ENCODE measurements at regions of chr15 and their contacts with region 1.

Region 1: DNA sequence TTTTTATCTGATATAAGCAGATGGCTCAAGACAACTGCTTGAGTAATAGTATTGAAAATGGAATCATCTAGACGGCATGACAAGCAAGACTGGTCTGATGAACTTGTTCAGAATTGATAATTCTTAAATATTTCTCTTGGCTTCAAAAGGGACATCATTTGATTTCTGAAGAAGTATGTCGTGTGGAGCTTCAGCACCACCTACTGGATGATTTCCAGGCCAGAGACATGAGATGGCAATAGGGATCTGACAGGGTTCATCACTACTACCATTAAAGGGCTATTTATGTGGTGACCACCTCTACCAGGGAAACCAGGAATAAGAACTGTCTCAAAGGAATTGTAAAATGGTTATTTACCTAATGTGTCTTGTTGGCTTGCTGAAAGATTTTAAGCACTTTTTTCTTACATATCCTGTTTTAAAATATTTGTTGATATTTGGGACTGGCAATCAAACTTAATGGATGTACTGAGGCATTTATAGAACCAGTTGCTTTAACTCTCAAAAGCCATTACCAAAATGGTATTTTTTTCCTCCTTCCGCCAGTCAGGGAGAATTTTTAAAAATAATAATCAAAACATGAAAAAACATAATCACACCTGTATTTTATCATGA is 99.5 kb upstream of the FAM98B start:
- DNase-seq: peak; percentile 61
- H3K4me3 ChIP-seq: no peak overlapping the region
- H3K27ac ChIP-seq: no peak overlapping the region
- H3K4me1 ChIP-seq: no peaks in the 10 kb centered on the region
- H3K27me3 ChIP-seq: no peaks in the 10 kb centered on the region
- CTCF ChIP-seq: peak; percentile 71 to 75 (median 72)
- EP300 ChIP-seq: no peak
- POLR2A ChIP-seq: no peak

Region 2: DNA sequence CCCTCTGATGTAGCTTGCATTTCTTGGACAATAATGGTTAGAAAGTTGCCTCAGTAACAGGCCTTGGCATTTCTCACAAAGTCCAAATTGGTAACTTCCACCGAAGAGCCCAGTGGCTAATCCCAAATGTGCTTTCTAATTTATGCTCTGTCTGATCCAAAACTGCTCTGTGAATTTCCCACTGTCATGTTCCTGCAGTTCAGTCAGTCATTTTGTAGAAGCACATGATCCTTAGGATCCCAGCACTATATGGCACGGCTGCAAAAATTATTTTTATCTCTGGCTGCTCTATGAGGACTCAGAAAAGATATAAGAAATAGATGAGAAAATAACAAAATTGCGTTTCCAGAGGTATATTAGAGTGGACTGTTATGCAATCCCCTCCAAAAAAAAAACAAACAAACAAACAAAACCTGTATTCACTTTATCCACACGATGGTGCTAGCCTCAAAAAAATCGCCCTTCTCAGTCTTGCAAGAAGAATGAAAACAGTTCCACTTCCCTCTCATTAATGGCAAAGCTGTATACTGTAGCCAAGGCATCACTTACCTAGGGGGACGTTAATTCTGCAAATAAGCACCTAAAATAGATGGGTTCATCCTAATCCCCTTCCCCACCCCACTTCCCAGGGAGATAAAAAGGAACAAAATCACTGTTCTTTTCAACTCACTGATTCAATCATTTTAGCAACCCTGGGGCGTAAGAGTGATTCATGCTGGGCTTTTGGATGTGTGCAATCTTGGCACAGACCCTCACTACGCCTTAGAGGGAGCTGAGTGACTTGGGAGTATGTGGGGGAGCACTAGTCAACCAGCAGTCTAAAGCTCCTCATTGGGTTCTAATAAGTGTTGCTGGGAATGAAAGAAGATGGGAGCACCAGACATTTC is 358.7 kb before region 1 on chr15:
- in situ Hi-C with region 1: loop called (anchors 10 to 25 kb)
- intact Hi-C with region 1: no loop called
- DNase-seq: no peak
- H3K4me3 ChIP-seq: no peak overlapping the region
- H3K27ac ChIP-seq: no peak overlapping the region
- H3K4me1 ChIP-seq: no peaks in the 10 kb centered on the region
- H3K27me3 ChIP-seq: no peaks in the 10 kb centered on the region
- CTCF ChIP-seq: peak; percentile 44 to 55 (median 48)
- EP300 ChIP-seq: no peak
- POLR2A ChIP-seq: no peak

Region 3: GRCh38 chr15:38002883-38003477 is 351.4 kb before region 1 on chr15:
- in situ Hi-C with region 1: loop called (anchors 10 to 25 kb)
- intact Hi-C with region 1: loop called (anchors 1 kb)
- DNase-seq: peak; percentile 71
- H3K4me3 ChIP-seq: no peak overlapping the region
- H3K27ac ChIP-seq: no peak overlapping the region
- H3K4me1 ChIP-seq: peaks cover 0 to 9% (median 0%) of the 10 kb centered on the region in 4 donors
- H3K27me3 ChIP-seq: no peaks in the 10 kb centered on the region
- CTCF ChIP-seq: peak; percentile 56 to 73 (median 57)
- EP300 ChIP-seq: no peak
- POLR2A ChIP-seq: no peak